Activated naive CD4-positive, alpha-beta T cell treated with anti-CD3 and anti-CD28 coated beads for 36 hours (primary cell): ENCODE measurements at regions of chr15 and their contacts with region 1.

Region 1: GRCh38 chr15:40344631-40345120 is 3.9 kb upstream of the CCDC9B start:
- DNase-seq: peak; percentile 85
- H3K4me3 Mint-ChIP-seq: no peak overlapping the region
- H3K27ac Mint-ChIP-seq: no peak overlapping the region
- H3K4me1 Mint-ChIP-seq: no peaks in the 10 kb centered on the region
- H3K27me3 Mint-ChIP-seq: no peaks in the 10 kb centered on the region

Region 2: GRCh38 chr15:39979606-39980005 is 365.1 kb before region 1 on chr15:
- CTCF ChIA-PET with region 1: no interaction called
- intact Hi-C with region 1: no loop called
- DNase-seq: no peak
- H3K4me3 Mint-ChIP-seq: no peak overlapping the region
- H3K27ac Mint-ChIP-seq: no peak overlapping the region
- H3K4me1 Mint-ChIP-seq: no peaks in the 10 kb centered on the region
- H3K27me3 Mint-ChIP-seq: no peaks in the 10 kb centered on the region

Region 3: DNA sequence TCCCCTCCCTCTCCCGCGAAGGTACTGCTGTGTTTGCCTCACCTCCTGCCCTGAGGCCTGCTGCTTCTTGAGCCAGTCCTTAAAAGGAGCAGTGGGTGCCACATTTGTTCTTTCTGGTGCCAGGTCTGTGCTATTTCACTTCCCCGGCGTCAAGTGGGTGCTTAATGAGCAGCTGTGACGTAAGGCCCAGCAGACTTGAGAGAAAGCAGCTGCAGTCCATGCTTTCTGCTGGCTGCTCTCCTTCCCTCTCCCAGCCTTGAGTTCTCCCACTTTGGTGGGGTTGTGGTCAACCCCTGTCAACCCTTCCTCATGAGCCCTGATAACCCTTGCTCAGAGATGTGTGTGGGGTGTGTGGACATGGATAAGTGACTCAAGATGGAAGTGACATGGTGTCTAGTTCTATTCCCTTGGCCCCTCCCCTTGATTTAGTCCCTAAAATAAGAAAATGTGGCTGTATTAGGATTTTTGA is 14.3 kb before region 1 on chr15:
- CTCF ChIA-PET with region 1: interaction called, 130 read pairs
- intact Hi-C with region 1: no loop called
- DNase-seq: no peak
- H3K4me3 Mint-ChIP-seq: no peak overlapping the region
- H3K27ac Mint-ChIP-seq: no peak overlapping the region
- H3K4me1 Mint-ChIP-seq: peaks cover 19% of the 10 kb centered on the region
- H3K27me3 Mint-ChIP-seq: no peaks in the 10 kb centered on the region

Region 4: GRCh38 chr15:40367686-40368611 is 23.3 kb after region 1 on chr15:
- CTCF ChIA-PET with region 1: interaction called, 29 read pairs
- intact Hi-C with region 1: loop called (anchors 1 kb)
- DNase-seq: peak; percentile 91
- H3K4me3 Mint-ChIP-seq: peak overlapping the region; percentile 75
- H3K27ac Mint-ChIP-seq: no peak overlapping the region
- H3K4me1 Mint-ChIP-seq: peaks cover 11% of the 10 kb centered on the region
- H3K27me3 Mint-ChIP-seq: no peaks in the 10 kb centered on the region

Region 5: DNA sequence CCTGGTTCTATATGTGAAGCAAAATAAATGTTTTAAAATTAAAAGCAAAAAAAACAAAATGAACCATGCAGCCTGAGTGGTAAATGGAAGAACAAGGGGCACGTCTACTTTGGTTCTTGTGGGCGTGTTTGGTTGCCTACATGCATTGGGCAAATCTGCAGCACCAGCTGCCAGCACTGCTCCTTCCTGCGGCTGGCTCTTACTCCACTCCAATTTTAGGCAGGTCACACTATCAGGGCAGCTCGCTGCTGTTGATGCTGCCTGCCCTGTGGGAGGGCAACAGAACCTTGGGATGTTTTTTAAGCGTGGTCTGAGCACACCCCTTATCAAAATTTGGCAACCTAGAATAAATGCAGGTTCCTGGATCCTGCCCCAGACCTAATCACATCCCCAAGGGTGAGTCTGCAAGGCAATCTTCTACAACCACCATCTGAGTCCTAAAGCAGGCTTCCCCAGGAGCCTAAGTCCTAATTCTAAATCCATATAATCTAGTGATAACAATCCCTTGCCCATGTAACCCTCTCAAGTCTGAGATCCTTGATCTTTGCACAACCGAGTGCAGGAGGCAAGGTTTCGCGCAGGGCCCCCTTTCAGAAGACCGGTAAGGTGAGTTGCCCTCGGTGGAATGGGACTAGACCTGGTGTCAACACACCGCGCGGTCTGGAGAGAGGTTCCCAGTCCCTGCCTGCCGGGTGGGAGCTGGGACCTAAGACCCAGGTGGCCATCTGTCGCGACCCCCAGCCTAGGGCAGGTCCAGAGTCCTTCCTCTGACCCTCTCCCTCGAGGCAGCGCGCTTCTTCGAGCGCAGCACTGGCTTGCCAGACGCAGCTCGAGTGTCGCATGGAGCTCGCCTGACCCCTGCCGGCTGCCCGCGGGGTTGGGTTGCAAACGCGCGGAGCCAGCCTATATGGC is 76.8 kb after region 1 on chr15:
- CTCF ChIA-PET with region 1: interaction called, 214 read pairs
- intact Hi-C with region 1: loop called (anchors 1 kb)
- DNase-seq: peak; percentile 90
- H3K4me3 Mint-ChIP-seq: no peak overlapping the region
- H3K27ac Mint-ChIP-seq: no peak overlapping the region
- H3K4me1 Mint-ChIP-seq: no peaks in the 10 kb centered on the region
- H3K27me3 Mint-ChIP-seq: no peaks in the 10 kb centered on the region

Region 6: GRCh38 chr15:41603941-41604911 is 1259.5 kb after region 1 on chr15:
- CTCF ChIA-PET with region 1: no interaction called
- intact Hi-C with region 1: no loop called
- DNase-seq: peak; percentile 72
- H3K4me3 Mint-ChIP-seq: peak overlapping the region; percentile 69
- H3K27ac Mint-ChIP-seq: no peak overlapping the region
- H3K4me1 Mint-ChIP-seq: peaks cover 11% of the 10 kb centered on the region
- H3K27me3 Mint-ChIP-seq: peaks cover 2% of the 10 kb centered on the region